IMR-90 (cell line): ENCODE measurements at regions of chr1 and their contacts with region 1.

Region 1: GRCh38 chr1:202160377-202160940 is at the start of gene PTPN7:
- DNase-seq: no peak
- ATAC-seq: no peak
- H3K4me3 ChIP-seq: no peak within 1 kb of the TSS
- H3K27ac ChIP-seq: no peak within 1 kb of the TSS
- H3K4me1 ChIP-seq: no peaks in the 10 kb centered on the region
- H3K27me3 ChIP-seq: peaks cover 31% of the 10 kb centered on the region
- CTCF ChIP-seq: no peak
- POLR2A ChIP-seq: no peak
- RAD21 ChIP-seq: no peak
- total RNA-seq, gene PTPN7: not detected in 2 replicates

Region 2: GRCh38 chr1:201275041-201275676 is 885.3 kb before region 1 on chr1:
- CTCF ChIA-PET with region 1: no interaction called
- POLR2A ChIA-PET with region 1: no interaction called
- dilution Hi-C with region 1: no loop called
- in situ Hi-C with region 1: no loop called
- intact Hi-C with region 1: loop called (anchors 10 kb)
- DNase-seq: peak; percentile 43
- ATAC-seq: peak; percentile 57; the same call in 1 of the 2 replicates
- H3K4me3 ChIP-seq: no peak overlapping the region
- H3K27ac ChIP-seq: no peak overlapping the region
- H3K4me1 ChIP-seq: no peaks in the 10 kb centered on the region
- H3K27me3 ChIP-seq: peaks cover 14% of the 10 kb centered on the region
- CTCF ChIP-seq: no peak
- POLR2A ChIP-seq: no peak
- RAD21 ChIP-seq: no peak

Region 3: DNA sequence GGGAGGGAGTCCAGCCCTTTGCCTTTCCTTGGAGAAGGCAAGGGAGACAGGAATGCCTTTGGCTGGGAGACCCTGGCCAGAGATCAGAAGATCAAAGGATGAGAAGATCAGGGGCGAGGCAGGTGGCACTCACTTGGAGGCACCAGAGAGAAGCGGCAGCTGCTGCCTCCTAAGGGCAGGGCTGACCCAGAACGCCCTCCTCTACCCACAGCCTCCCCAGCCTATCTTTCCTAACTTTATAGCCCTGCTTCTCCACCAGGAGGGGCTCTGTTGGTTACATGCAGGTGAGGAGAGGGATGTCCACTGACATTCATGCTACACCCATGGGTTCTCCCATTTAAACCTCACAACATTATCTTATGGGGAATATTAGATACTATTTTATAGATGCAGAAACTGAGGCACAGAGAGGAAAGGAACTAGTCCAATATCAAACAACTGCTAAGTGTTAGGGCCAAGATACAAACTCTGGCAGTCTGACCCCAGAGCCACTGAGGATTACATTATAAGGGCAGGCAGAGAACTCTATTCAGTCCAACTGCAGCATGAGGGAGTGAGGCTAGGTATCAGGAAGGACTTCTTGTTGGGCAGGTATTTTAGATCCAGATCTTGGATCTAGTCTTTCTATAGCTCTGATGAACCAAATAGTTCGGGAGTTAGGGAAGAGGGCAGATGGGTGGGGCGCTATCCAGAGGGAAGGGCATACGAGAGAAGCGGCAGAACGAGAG is 53.1 kb after region 1 on chr1:
- CTCF ChIA-PET with region 1: no interaction called
- POLR2A ChIA-PET with region 1: no interaction called
- dilution Hi-C with region 1: no loop called
- in situ Hi-C with region 1: no loop called
- intact Hi-C with region 1: no loop called
- DNase-seq: no peak
- ATAC-seq: no peak
- H3K4me3 ChIP-seq: no peak overlapping the region
- H3K27ac ChIP-seq: no peak overlapping the region
- H3K4me1 ChIP-seq: no peaks in the 10 kb centered on the region; the same call in 1 of the 2 replicates
- H3K27me3 ChIP-seq: peaks cover 91% of the 10 kb centered on the region
- CTCF ChIP-seq: no peak; the same call in 1 of the 2 replicates
- POLR2A ChIP-seq: no peak
- RAD21 ChIP-seq: no peak